ENCODE measurements at regions of chr17 and their contacts with region 1.

Region 1: DNA sequence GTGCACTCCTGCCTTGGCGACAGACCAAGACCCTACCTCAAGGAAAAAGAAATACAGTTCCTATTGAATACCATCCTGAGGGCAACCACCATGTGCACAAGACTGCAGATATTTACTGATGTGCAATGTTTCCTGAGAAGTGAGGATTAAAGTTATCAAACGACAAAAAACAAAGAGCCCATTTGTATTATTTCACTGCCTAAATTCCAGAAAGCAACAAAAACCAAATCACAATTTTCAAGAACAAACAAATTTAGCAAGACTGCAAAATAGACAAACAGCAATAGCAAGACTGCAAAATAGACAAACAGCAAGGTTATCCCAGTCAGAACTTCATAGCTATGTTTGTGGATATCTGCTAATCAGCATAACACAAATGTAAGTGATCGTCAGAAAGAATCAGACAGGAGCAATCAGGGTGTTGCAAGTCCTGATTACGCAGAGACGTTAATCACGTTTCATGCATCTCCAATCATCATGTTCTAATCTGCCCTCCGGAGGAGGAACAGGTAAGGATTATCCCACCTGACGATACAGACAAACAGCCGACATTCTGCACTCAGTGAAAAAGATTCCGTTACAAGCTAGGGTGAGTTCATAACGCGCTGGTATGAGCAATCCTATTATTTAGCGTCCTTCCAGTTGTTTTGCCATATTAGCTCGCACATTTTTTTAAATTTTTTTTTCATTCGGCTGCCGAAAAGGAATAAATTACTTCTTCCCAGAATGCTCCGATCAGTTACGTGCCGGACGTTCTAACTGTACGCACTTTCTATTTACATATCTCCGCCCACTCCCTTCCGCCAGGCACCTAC is 2.9 kb downstream of the TMEM107 start:
- DNase-seq: peak; percentile 95
- H3K4me3 ChIP-seq: peak overlapping the region; percentile 81
- H3K27ac ChIP-seq: peak overlapping the region; percentile 91
- H3K4me1 ChIP-seq: peaks cover 36% of the 10 kb centered on the region
- CTCF ChIP-seq: no peak

Region 2: DNA sequence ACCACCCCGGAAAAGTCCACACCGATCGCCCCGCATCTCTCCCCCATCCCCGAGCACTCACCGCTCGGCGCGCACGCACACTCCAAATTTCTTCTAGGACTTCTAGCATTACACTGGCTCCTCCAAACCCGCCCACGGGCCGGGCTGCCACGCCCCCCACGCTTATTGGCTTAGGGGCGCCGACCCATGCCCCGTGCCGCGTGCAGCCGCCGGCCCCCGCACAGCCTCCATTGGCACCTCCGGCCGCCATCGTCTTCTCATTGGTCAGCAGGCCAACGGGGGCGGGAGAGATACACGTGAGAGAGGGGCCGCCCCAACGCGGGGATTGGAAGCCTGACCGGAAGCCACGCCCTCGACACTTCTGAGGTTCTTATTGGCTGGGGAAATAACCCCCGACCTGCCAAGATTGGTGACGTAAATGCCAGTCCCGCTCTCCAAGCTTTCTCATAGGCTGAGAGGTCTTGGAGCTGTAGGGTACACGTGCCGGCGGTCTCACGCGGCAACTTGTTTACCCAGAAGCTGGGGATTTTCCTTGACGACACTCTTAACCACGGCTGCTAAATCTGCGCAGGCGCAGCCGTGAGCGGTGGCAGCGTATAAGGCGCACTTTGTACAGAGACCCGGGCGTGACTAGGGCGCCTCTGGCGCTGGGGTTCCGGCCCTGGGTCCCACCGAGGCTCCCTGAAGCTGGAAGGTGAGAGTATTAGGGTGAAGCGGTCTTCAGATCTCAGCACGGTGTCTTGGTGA is 16.8 kb before region 1 on chr17:
- CTCF ChIA-PET with region 1: no interaction called
- POLR2A ChIA-PET with region 1: interaction called, 18 read pairs
- intact Hi-C with region 1: no loop called
- DNase-seq: peak; percentile 100
- H3K4me3 ChIP-seq: peak overlapping the region; percentile 75
- H3K27ac ChIP-seq: peak overlapping the region; percentile 80
- H3K4me1 ChIP-seq: peaks cover 60% of the 10 kb centered on the region
- CTCF ChIP-seq: peak; percentile 43; the same call in 1 of the 2 replicates

Region 3: DNA sequence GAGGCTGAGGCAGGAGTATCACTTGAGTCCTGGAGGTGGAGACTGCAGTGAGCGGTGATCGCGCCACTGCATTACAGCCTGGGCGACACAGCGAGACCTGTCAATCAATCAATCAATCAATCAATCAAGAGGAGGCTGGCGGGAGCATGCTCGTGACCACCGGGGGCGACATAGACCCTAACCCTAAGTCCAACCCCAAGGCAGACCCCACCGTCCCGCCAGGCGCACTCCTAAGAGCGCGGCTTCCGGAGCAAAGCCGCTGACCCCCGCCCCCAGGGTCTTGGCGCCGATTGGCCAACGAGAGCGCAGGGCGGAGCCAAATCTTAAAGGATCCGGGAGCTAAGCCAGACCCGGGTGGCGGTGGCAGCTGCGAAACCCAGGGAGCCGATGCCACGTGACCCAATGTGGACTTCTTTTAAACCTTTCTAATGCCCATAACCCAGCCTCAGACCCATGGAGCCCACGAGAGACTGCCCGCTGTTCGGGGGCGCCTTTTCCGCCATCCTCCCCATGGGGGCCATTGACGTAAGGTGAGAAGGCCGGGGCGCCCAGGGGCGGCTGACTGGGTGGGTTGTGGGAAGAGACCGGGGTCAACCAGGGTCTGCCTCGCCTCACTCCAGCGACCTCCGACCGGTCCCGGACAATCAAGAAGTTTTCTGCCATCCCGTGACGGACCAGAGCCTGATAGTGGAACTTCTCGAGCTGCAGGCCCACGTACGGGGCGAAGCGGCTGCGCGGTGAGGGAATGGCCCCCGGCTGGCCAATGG is 115.3 kb after region 1 on chr17 and contains the start of gene RANGRF:
- CTCF ChIA-PET with region 1: no interaction called
- POLR2A ChIA-PET with region 1: no interaction called
- intact Hi-C with region 1: no loop called
- DNase-seq: peak; percentile 90
- H3K4me3 ChIP-seq: peak within 1 kb of the TSS; percentile 83
- H3K27ac ChIP-seq: peak within 1 kb of the TSS; percentile 46
- H3K4me1 ChIP-seq: peaks cover 42% of the 10 kb centered on the region
- CTCF ChIP-seq: peak; percentile 29; the same call in 1 of the 2 replicates
- total RNA-seq, gene RANGRF: 30.6 and 32.2 TPM in 2 replicates

Measured in OCI-LY7 (cell line).